ENCODE measurements at regions of chr20 and their contacts with region 1.

Region 1: GRCh38 chr20:63216041-63216848 is at the start of gene YTHDF1:
- DNase-seq: peak; percentile 70 to 96
- H3K4me3 ChIP-seq: peak within 1 kb of the TSS; percentile 69 to 92 (median 81)
- H3K27ac ChIP-seq: peak within 1 kb of the TSS; percentile 49; the same call in 1 of the 2 replicates
- H3K4me1 ChIP-seq: peaks cover 0 to 11% (median 2%) of the 10 kb centered on the region in 4 experiments; a peak in 4 of 7 replicates
- H3K27me3 ChIP-seq: peaks cover 0 to 3% (median 0%) of the 10 kb centered on the region in 4 experiments; a peak in 1 of 7 replicates
- CTCF ChIP-seq: no peak
- EP300 ChIP-seq: 0 out of 3 replicates have a peak, but pooled peaks of 1 of the 2 experiments have one; percentile 10
- POLR2A ChIP-seq: peak in 1 of 2 experiments; percentile 51; a peak in 1 of 3 replicates
- RAD21 ChIP-seq: no peak
- total RNA-seq, gene YTHDF1: 66.0 and 66.1 TPM in 2 replicates

Region 2: DNA sequence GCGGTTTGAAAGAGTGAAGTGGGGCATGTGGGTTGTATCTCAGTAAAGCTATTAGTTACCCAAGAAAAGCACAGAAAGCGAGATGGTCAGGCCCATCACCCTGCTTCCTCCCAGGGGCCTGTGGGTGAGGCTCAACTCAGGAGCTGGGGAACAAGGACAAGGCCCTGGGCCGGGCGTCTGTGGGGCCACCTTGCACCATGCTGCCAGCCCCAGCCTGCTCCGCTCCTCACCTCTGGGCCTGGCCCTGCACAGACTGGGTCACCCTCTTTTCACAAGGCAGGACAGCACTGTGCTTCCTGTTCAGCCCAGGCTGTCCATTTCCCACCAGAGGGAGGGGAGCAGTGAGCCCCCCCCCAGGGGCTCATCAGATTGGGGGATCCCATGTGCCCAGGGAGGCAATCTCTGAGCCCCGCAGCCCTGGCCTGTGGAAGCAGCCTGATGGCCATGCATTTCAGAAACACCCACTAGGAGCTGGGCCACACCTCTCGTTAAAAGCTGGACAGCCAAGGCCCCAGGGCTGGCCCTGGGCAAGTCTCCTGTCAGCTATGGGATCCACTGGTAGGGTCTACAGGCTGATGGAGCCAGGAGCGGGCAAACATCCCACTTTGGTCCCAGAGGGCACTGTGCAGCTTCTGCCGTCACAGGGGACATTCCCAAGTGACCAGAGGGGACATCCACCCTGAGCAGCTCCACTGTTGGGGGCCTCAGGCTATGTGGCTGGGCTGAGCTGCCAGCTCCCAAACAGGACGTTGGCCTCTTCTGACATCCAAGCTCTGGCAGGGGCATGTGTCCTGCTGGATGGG is 56.2 kb before region 1 on chr20:
- CTCF ChIA-PET with region 1: no interaction called
- POLR2A ChIA-PET with region 1: no interaction called
- DNase-seq: no peak
- H3K4me3 ChIP-seq: no peak overlapping the region
- H3K27ac ChIP-seq: no peak overlapping the region
- H3K4me1 ChIP-seq: peaks cover 0 to 3% (median 1%) of the 10 kb centered on the region in 4 experiments; a peak in 2 of 7 replicates
- H3K27me3 ChIP-seq: no peaks in the 10 kb centered on the region; a peak in 1 of 7 replicates
- CTCF ChIP-seq: no peak
- EP300 ChIP-seq: no peak
- POLR2A ChIP-seq: no peak
- RAD21 ChIP-seq: no peak

Region 3: DNA sequence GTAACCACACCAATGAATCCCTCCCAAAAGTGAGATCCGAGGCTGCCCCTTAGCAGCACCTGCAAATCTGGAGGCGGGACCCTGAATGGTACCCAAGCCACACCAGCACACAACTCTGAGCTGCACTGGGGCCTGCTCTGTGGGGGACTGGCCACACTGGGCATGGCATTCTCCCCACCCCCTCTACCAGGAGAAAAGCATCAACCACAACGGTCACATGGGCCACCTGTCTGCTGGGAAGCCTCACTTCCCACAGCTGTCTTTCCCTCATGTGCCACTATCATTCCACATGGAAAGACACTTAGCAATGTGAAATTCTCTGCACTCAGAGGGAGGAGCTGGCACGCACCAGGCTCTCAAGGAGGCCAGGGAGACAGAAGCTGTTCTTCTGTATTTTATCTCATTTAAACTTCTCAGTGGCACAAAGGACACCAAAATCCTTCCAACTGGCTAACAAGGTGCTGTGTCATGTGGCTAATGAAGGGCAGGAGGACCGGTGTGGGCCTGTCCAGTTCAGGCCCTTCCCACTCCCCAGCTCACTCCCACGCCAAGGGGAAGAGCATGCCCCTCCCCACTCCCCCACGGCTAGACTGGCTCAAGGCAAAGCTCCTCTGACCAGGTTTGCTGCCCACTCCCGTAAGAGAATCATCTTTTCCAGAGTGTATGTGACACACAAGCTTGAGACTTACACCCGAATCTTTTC is 19.3 kb before region 1 on chr20:
- CTCF ChIA-PET with region 1: interaction called, 19 read pairs
- POLR2A ChIA-PET with region 1: interaction called, 14 read pairs
- DNase-seq: no peak
- H3K4me3 ChIP-seq: no peak overlapping the region
- H3K27ac ChIP-seq: no peak overlapping the region
- H3K4me1 ChIP-seq: peaks cover 0 to 2% (median 0%) of the 10 kb centered on the region in 4 experiments; a peak in 3 of 7 replicates
- H3K27me3 ChIP-seq: no peaks in the 10 kb centered on the region
- CTCF ChIP-seq: no peak
- EP300 ChIP-seq: no peak
- POLR2A ChIP-seq: no peak
- RAD21 ChIP-seq: no peak